HepG2 (cell line): ENCODE measurements at regions of chr14 and their contacts with region 1.

Region 1: GRCh38 chr14:43503590-43503907 is 1003.5 kb downstream of the FSCB start:
- DNase-seq: peak; percentile 17
- ATAC-seq: no peak
- H3K4me3 ChIP-seq: no peak overlapping the region
- H3K27ac ChIP-seq: no peak overlapping the region
- H3K4me1 ChIP-seq: no peaks in the 10 kb centered on the region
- H3K27me3 ChIP-seq: no peaks in the 10 kb centered on the region
- CTCF ChIP-seq: peak; percentile 39
- EP300 ChIP-seq: no peak
- POLR2A ChIP-seq: no peak
- RAD21 ChIP-seq: no peak; the same call in 1 of the 2 replicates

Region 2: GRCh38 chr14:43449377-43450080 is 54.0 kb before region 1 on chr14:
- CTCF ChIA-PET with region 1: no interaction called
- POLR2A ChIA-PET with region 1: no interaction called
- in situ Hi-C with region 1: no loop called
- intact Hi-C with region 1: no loop called
- DNase-seq: no peak
- ATAC-seq: no peak
- H3K4me3 ChIP-seq: no peak overlapping the region
- H3K27ac ChIP-seq: no peak overlapping the region
- H3K4me1 ChIP-seq: no peaks in the 10 kb centered on the region
- H3K27me3 ChIP-seq: no peaks in the 10 kb centered on the region
- CTCF ChIP-seq: no peak
- EP300 ChIP-seq: no peak
- POLR2A ChIP-seq: no peak
- RAD21 ChIP-seq: no peak

Region 3: DNA sequence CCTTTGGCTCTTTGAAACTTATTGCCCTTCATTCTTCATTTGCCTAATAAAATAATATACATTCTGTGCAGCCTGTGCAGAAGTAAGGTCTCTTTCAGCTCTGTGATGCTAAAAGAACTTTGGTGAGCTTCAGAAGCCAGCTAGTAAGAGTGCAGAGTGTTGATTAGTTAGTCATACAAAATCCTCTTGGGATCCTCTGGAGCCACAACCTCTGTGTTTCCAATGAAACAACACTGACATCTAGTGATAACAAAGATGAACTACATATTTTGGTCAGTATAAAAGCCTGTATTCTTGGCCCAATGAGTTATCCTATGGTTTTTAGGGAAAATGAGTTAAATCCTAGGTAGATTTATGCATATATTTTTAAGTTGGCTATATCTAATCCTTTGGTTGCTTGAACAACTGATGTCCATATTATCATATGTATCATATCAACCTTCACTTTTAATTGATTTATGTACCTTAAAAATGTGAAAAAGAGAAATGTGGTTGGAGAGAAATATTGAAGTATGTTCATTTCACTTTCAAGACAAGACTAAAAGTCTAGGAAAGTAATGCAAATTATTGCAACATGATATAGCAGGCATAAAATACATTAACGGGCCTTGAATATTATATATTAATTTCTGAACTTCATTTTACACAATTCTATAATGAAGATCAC is 1299.8 kb after region 1 on chr14:
- CTCF ChIA-PET with region 1: no interaction called
- POLR2A ChIA-PET with region 1: no interaction called
- in situ Hi-C with region 1: loop called (anchors 25 kb)
- intact Hi-C with region 1: loop called (anchors 10 kb)
- DNase-seq: peak; percentile 35
- ATAC-seq: peak; percentile 92
- H3K4me3 ChIP-seq: no peak overlapping the region
- H3K27ac ChIP-seq: no peak overlapping the region
- H3K4me1 ChIP-seq: no peaks in the 10 kb centered on the region
- H3K27me3 ChIP-seq: no peaks in the 10 kb centered on the region
- CTCF ChIP-seq: peak; percentile 76
- EP300 ChIP-seq: no peak
- POLR2A ChIP-seq: no peak
- RAD21 ChIP-seq: peak; percentile 31; the same call in 1 of the 2 replicates